ENCODE measurements at regions of chr21 and their contacts with region 1.

Region 1: DNA sequence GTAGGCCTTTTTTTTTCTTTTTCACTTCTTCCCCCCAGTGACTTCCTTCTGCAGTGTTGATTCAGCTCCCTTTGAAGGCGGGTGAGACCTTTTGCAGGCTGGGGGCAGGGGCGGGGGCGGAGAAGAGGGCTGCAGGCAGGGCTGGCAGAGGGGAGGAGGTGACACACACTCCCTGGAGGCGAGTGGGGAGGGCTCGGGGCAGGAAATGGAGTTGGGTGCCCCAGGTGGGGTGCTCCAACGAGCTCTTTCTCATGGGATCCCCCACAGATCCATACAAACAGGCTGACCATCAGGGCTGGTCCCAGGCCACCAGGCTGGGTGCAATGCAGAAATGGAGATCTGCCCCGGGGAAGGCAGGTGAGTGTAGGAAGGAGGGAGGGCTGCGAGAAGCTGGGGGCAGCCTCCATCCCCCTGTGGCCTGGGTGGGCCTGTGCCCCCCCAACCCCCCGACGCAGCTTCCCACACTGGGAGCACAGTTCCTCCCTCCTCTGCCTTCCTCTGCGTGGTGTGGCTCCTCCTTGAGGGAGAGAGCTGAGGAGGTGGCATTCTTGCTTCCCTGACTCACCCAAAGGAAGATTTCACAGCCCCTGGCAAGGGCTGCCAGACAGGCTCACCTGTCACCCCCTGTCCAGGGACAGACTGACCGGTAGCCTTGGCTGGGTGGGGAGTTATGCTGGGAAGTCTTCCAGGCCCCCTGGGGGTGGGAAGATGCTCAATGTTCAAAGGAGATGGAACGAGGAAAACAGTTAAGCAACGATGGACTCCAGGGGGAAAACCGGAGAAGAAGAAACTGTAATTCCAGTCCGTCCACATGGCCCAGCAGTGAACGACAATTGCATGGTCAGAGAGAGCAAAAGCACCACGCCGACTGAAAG is 7.1 kb upstream of the ITGB2 start:
- DNase-seq: peak in 1 of 2 donors; percentile 64
- H3K4me3 ChIP-seq: no peak overlapping the region
- H3K27ac ChIP-seq: no peak overlapping the region
- H3K4me1 ChIP-seq: peaks cover 0 to 72% (median 45%) of the 10 kb centered on the region in 4 donors
- H3K27me3 ChIP-seq: peaks cover 0 to 30% of the 10 kb centered on the region in 2 donors
- CTCF ChIP-seq: no peak

Region 2: DNA sequence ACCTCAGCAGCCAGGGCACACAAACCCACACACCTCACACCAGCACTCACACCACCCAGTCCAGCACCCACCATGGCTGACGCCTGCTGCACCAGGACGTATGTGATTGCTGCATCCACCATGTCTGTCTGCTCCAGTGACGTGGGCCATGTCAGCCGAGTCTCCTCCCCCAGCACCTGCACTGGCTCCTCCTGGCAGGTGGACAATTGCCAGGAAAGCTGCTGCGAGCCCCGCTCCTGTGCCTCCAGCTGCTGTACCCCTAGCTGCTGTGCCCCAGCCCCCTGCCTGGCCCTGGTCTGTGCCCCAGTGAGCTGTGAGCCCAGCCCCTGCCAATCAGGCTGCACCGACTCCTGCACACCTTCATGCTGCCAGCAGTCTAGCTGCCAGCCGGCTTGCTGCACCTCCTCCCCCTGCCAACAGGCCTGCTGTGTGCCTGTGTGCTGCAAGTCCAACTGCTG is 315.8 kb before region 1 on chr21 and contains the start of gene KRTAP10-8:
- intact Hi-C with region 1: no loop called
- DNase-seq: no peak
- H3K4me3 ChIP-seq: no peak within 1 kb of the TSS
- H3K27ac ChIP-seq: no peak within 1 kb of the TSS
- H3K4me1 ChIP-seq: no peaks in the 10 kb centered on the region
- H3K27me3 ChIP-seq: peaks cover 0 to 39% of the 10 kb centered on the region in 2 donors
- CTCF ChIP-seq: no peak

Region 3: DNA sequence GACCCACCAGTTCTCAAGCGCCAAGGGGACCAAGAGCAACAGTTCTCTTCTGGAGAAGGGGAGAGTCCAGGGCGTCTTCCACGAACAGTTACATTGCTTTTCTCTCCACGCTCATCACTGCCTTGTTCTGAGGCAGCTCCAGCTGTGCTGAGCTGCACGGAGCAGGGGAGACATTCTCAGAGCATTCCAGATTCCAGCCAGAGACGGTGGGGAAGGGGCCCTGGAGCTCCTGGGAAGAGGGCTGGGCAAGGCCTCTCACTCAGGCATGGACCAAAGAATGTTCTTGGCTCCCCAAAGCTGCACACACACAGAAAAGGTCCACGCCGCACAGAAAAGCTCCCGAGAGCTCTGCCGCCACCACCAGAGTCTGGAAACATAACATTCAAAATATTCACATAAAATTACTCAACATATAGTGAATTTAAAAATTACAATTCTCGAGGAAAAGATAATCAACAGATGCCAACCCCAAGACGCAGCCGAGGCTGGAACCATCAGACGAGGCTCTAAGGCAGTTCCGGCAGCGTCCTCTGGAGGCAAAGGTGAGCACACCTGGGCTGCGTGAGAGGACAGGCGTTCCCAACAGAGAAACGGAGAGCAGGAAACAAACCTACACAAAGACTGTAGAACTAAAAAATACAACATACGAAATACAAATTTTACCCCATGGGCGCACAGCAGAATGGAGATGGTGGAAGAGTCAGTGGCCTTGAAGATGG is 166.7 kb before region 1 on chr21:
- intact Hi-C with region 1: no loop called
- DNase-seq: peak; percentile 3 to 38
- H3K4me3 ChIP-seq: no peak overlapping the region
- H3K27ac ChIP-seq: no peak overlapping the region
- H3K4me1 ChIP-seq: peaks cover 0 to 7% (median 0%) of the 10 kb centered on the region in 4 donors
- H3K27me3 ChIP-seq: no peaks in the 10 kb centered on the region
- CTCF ChIP-seq: no peak

Region 4: GRCh38 chr21:44817506-44817880 is 110.3 kb before region 1 on chr21:
- intact Hi-C with region 1: loop called (anchors 10 kb)
- DNase-seq: peak; percentile 82 to 95
- H3K4me3 ChIP-seq: peak overlapping the region; percentile 67 to 85
- H3K27ac ChIP-seq: peak overlapping the region; percentile 77 to 86
- H3K4me1 ChIP-seq: peaks cover 0 to 25% (median 20%) of the 10 kb centered on the region in 4 donors
- H3K27me3 ChIP-seq: no peaks in the 10 kb centered on the region
- CTCF ChIP-seq: no peak

Region 5: GRCh38 chr21:44892536-44893277 is 35.1 kb before region 1 on chr21:
- intact Hi-C with region 1: loop called (anchors 2 kb)
- DNase-seq: peak in 1 of 2 donors; percentile 67
- H3K4me3 ChIP-seq: no peak overlapping the region
- H3K27ac ChIP-seq: no peak overlapping the region
- H3K4me1 ChIP-seq: peaks cover 0 to 8% (median 0%) of the 10 kb centered on the region in 4 donors
- H3K27me3 ChIP-seq: peaks cover 0 to 18% of the 10 kb centered on the region in 2 donors
- CTCF ChIP-seq: peak; percentile 86 to 87

Region 6: GRCh38 chr21:45209046-45209445 is 281.2 kb after region 1 on chr21:
- intact Hi-C with region 1: no loop called
- DNase-seq: no peak
- H3K4me3 ChIP-seq: no peak overlapping the region
- H3K27ac ChIP-seq: peak overlapping the region; percentile 63 to 77
- H3K4me1 ChIP-seq: peaks cover 0 to 32% (median 9%) of the 10 kb centered on the region in 4 donors
- H3K27me3 ChIP-seq: no peaks in the 10 kb centered on the region
- CTCF ChIP-seq: no peak